Caco-2 (cell line): ENCODE measurements at regions of chr19 and their contacts with region 1.

Region 1: GRCh38 chr19:19138169-19138981 is at the start of gene TMEM161A:
- DNase-seq: peak; percentile 97 to 99
- H3K4me3 ChIP-seq: peak within 1 kb of the TSS; percentile 87
- H3K4me3 Mint-ChIP-seq: peak within 1 kb of the TSS; percentile 97
- H3K27ac Mint-ChIP-seq: peak within 1 kb of the TSS; percentile 97
- H3K4me1 ChIP-seq: no peaks in the 10 kb centered on the region
- H3K4me1 Mint-ChIP-seq: no peaks in the 10 kb centered on the region
- H3K27me3 ChIP-seq: no peaks in the 10 kb centered on the region
- H3K27me3 Mint-ChIP-seq: no peaks in the 10 kb centered on the region
- CTCF ChIP-seq: no peak
- total RNA-seq, gene TMEM161A: 36.9 and 38.3 TPM in 2 replicates

Region 2: DNA sequence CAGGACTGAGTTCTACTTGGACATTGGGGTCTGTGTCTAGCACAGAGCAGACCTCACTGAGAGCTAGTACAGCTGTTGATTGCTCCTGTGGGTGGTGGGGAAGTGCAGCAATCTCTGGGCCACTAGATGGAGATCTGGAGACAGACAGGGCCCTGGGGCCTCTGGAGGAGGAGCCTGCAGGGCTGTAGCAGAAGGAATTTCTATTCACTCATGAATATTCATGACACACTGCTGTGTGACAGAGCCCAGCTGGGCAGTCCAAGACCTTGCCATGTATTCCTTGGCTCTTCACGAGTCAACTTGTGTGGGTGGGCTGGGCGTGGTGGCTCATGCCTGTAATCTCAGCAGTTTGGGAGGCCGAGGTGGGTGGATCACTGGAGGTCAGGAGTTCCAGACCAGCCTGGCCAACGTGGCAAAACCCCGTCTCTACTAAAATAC is 142.6 kb before region 1 on chr19:
- CTCF ChIA-PET with region 1: no interaction called
- POLR2A ChIA-PET with region 1: no interaction called
- intact Hi-C with region 1: loop called (anchors 1 kb)
- DNase-seq: peak; percentile 72 to 74
- H3K4me3 ChIP-seq: no peak overlapping the region
- H3K4me3 Mint-ChIP-seq: no peak overlapping the region
- H3K27ac Mint-ChIP-seq: no peak overlapping the region
- H3K4me1 ChIP-seq: no peaks in the 10 kb centered on the region
- H3K4me1 Mint-ChIP-seq: no peaks in the 10 kb centered on the region
- H3K27me3 ChIP-seq: no peaks in the 10 kb centered on the region
- H3K27me3 Mint-ChIP-seq: no peaks in the 10 kb centered on the region
- CTCF ChIP-seq: peak; percentile 42 to 78

Region 3: GRCh38 chr19:19053508-19054314 is 84.7 kb before region 1 on chr19:
- CTCF ChIA-PET with region 1: no interaction called
- POLR2A ChIA-PET with region 1: no interaction called
- intact Hi-C with region 1: loop called (anchors 1 kb)
- DNase-seq: peak; percentile 51 to 69
- H3K4me3 ChIP-seq: no peak overlapping the region
- H3K4me3 Mint-ChIP-seq: no peak overlapping the region
- H3K27ac Mint-ChIP-seq: no peak overlapping the region
- H3K4me1 ChIP-seq: no peaks in the 10 kb centered on the region
- H3K4me1 Mint-ChIP-seq: no peaks in the 10 kb centered on the region
- H3K27me3 ChIP-seq: no peaks in the 10 kb centered on the region
- H3K27me3 Mint-ChIP-seq: no peaks in the 10 kb centered on the region
- CTCF ChIP-seq: peak; percentile 73 to 80

Region 4: DNA sequence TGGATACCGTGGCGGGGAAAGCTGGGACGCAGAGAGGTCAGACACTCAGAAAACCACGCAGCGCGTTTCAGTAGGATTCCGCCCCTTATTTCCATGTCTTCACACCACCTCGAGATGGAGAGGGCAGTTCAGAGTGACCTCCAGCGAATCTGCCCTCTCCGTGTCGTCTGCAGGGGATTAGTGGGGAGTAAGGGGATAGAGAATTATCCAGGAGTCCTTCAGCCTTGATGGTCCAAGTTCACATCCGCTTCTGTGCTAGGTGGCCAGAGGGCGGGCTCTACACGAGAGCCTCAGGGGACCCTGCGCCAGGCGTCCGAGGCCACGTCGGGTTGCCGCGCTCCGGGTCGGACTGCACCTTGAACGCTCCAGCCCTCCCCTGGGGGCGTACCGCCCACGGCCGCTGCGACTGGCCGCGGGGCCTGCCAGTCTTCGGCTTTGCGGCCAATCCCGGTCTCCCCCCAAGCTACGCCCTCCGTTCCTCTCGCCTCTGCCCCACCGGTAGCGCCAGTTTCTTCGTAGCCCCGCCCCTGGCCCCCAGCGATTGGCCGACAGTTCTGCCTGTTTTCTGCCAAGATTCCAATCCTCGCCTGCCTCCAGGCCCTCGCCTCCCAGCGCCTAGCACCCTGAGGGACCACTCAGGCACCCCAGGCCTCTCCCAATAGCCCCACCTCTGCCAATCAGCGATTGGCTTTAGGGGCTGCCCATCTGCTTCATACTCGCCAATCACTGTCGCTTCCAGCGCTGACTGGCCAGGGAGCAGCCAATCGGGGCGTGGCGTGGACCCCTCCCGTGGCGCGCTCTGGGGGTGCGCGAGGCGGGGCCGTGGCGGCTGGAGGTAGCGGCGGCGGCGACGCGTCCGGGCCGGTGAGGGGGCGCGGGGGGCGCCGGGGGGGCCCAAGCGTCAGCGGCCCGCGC is 74.9 kb before region 1 on chr19 and contains the start of gene SLC25A42:
- CTCF ChIA-PET with region 1: no interaction called
- POLR2A ChIA-PET with region 1: interaction called, 3 read pairs
- intact Hi-C with region 1: loop called (anchors 2 kb)
- DNase-seq: peak; percentile 99
- H3K4me3 ChIP-seq: peak within 1 kb of the TSS; percentile 64
- H3K4me3 Mint-ChIP-seq: peak within 1 kb of the TSS; percentile 83
- H3K27ac Mint-ChIP-seq: peak within 1 kb of the TSS; percentile 66
- H3K4me1 ChIP-seq: peaks cover 11% of the 10 kb centered on the region
- H3K4me1 Mint-ChIP-seq: no peaks in the 10 kb centered on the region
- H3K27me3 ChIP-seq: no peaks in the 10 kb centered on the region
- H3K27me3 Mint-ChIP-seq: no peaks in the 10 kb centered on the region
- CTCF ChIP-seq: no peak
- total RNA-seq, gene SLC25A42: 4.5 and 5.4 TPM in 2 replicates

Region 5: GRCh38 chr19:19096641-19097627 is 41.4 kb before region 1 on chr19:
- CTCF ChIA-PET with region 1: no interaction called
- POLR2A ChIA-PET with region 1: no interaction called
- intact Hi-C with region 1: loop called (anchors 2 kb)
- DNase-seq: peak; percentile 91 to 95
- H3K4me3 ChIP-seq: no peak overlapping the region
- H3K4me3 Mint-ChIP-seq: peak overlapping the region; percentile 51
- H3K27ac Mint-ChIP-seq: peak overlapping the region; percentile 92
- H3K4me1 ChIP-seq: peaks cover 48% of the 10 kb centered on the region
- H3K4me1 Mint-ChIP-seq: peaks cover 14% of the 10 kb centered on the region
- H3K27me3 ChIP-seq: no peaks in the 10 kb centered on the region
- H3K27me3 Mint-ChIP-seq: no peaks in the 10 kb centered on the region
- CTCF ChIP-seq: peak; percentile 12 to 20

Region 6: GRCh38 chr19:19170053-19170872 is 31.9 kb after region 1 on chr19 and contains the start of gene MEF2B:
- CTCF ChIA-PET with region 1: no interaction called
- POLR2A ChIA-PET with region 1: no interaction called
- intact Hi-C with region 1: loop called (anchors 5 kb)
- DNase-seq: peak; percentile 88 to 91
- H3K4me3 ChIP-seq: peak within 1 kb of the TSS; percentile 27
- H3K4me3 Mint-ChIP-seq: peak within 1 kb of the TSS; percentile 59
- H3K27ac Mint-ChIP-seq: no peak within 1 kb of the TSS
- H3K4me1 ChIP-seq: no peaks in the 10 kb centered on the region; the same call in 1 of the 2 replicates
- H3K4me1 Mint-ChIP-seq: peaks cover 21% of the 10 kb centered on the region
- H3K27me3 ChIP-seq: no peaks in the 10 kb centered on the region
- H3K27me3 Mint-ChIP-seq: peaks cover 3% of the 10 kb centered on the region
- CTCF ChIP-seq: no peak
- total RNA-seq, gene MEF2B: 0.82 and 1.5 TPM in 2 replicates

Region 7: GRCh38 chr19:19211499-19212432 is 73.4 kb after region 1 on chr19 and contains the start of gene NCAN:
- CTCF ChIA-PET with region 1: no interaction called
- POLR2A ChIA-PET with region 1: no interaction called
- intact Hi-C with region 1: no loop called
- DNase-seq: no peak
- H3K4me3 ChIP-seq: no peak within 1 kb of the TSS
- H3K4me3 Mint-ChIP-seq: no peak within 1 kb of the TSS
- H3K27ac Mint-ChIP-seq: no peak within 1 kb of the TSS
- H3K4me1 ChIP-seq: no peaks in the 10 kb centered on the region
- H3K4me1 Mint-ChIP-seq: no peaks in the 10 kb centered on the region
- H3K27me3 ChIP-seq: no peaks in the 10 kb centered on the region
- H3K27me3 Mint-ChIP-seq: peaks cover 5% of the 10 kb centered on the region
- CTCF ChIP-seq: no peak
- total RNA-seq, gene NCAN: not detected in 2 replicates